Activated CD4-positive, alpha-beta memory T cell treated with anti-CD3 and anti-CD28 coated beads for 36 hours (primary cell): ENCODE measurements at regions of chr13 and their contacts with region 1.

Region 1: DNA sequence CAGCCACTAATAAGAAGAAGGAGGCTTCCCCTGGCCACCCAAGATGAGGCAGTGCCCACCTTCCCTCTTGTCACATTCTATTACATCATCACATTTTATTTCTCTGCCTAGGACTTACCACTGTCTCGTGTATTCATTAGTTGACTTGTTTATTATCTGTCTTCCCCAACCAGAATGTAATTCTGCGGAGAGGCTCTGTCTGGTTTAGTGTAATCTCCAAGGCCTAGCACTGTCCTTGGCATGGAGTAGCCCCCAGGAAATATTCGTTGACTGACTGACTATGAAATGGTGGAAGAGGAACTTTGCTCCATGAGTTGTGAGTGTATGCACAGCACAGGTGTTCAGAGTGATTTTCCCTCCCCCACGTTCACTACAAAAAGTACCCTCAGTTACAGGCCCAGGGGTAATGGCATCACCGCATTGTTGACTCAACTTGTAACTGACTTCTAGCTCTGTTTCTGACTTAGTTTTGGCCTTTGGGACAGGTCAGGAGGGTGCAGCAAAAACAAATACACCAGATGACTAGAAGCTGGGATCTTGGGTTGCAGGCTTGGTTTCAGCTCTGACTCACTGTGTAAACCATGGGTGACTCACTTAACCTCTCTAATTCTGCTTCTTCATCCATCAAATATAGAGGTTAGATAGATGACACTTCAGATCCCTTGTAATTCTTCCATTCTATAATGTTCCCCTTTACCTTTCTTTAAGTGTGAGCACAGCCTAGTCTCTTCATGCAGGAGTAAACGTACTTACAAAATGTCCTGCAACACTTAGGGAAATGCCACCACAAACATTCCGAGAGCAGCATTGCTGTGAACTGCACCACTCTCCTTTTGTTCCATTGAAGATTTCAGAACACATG is 229.7 kb downstream of the KCNRG start:
- DNase-seq: peak; percentile 85
- H3K4me3 Mint-ChIP-seq: no peak overlapping the region
- H3K27ac Mint-ChIP-seq: no peak overlapping the region
- H3K4me1 Mint-ChIP-seq: peaks cover 41% of the 10 kb centered on the region
- H3K27me3 Mint-ChIP-seq: peaks cover 29% of the 10 kb centered on the region

Region 2: DNA sequence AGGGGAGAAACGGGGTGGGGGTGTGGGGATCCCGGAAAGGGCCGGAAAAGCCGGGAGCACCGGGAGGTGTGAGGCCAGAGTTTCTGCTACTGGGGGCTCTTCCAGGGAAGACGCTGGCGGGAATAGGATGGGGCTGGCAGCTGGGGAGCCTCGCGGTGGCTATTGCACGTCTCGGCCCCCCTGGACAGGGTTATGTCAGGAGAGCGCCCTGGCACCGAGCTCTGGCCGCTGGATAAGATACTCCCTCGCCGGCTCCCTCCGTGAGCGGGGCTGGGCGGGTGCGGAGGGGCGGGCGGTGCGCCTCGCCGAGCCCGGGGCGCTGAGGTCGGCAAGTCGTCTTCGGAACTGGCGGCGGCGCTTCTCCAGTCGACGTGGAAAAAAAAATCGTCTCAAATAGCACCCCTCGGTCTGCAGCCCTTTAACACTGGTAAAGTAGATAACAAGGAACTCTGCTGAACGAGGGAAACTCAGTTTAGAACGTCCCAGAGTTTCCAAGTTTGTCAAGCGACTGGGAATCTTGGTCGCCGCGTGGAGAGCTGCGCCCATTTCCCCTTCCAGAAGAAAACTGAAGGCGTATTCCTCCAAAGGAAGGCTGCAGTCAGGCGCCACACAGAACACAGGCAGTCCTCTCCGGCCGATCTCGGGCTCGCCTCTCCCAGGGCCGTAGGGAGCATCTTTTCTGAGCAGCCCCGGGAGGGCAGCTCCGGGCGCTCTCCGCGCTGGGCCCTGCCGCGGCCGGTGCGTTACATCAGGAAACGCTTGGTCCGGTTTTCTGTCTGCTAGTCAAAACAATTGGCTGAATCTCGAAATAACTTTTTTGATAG is 114.6 kb before region 1 on chr13:
- CTCF ChIA-PET with region 1: no interaction called
- POLR2A ChIA-PET with region 1: interaction called, 8 read pairs
- intact Hi-C with region 1: loop called (anchors 1 kb)
- DNase-seq: peak; percentile 42
- H3K4me3 Mint-ChIP-seq: peak overlapping the region; percentile 66
- H3K27ac Mint-ChIP-seq: peak overlapping the region; percentile 8
- H3K4me1 Mint-ChIP-seq: peaks cover 63% of the 10 kb centered on the region
- H3K27me3 Mint-ChIP-seq: peaks cover 64% of the 10 kb centered on the region

Region 3: DNA sequence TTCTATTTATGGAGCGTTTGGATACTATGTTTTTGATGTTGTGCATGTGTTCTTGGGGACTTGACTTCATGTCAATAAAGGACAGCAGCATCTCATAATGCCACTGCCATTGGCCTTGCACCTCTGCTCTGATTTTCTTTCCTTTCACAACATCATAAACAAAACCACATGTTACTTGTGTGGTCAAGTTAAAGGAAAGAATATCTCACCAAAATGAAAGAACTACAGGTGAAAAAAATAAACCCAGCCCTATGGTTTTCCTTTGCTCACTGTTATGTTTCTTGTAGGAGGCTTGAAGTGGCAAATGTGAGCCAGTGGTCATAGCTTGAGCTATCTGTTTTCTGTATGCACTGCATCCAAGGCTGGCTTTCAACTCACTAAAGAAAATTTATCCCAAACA is 10.7 kb after region 1 on chr13:
- CTCF ChIA-PET with region 1: no interaction called
- POLR2A ChIA-PET with region 1: no interaction called
- intact Hi-C with region 1: loop called (anchors 1 kb)
- DNase-seq: no peak
- H3K4me3 Mint-ChIP-seq: no peak overlapping the region
- H3K27ac Mint-ChIP-seq: no peak overlapping the region
- H3K4me1 Mint-ChIP-seq: peaks cover 38% of the 10 kb centered on the region
- H3K27me3 Mint-ChIP-seq: peaks cover 27% of the 10 kb centered on the region